Activated CD4-positive, alpha-beta T cell treated with anti-CD3 and anti-CD28 coated beads for 36 hours (primary cell): ENCODE measurements at regions of chr3 and their contacts with region 1.

Region 1: GRCh38 chr3:69212411-69213139 is 90.2 kb upstream of the LMOD3 start:
- DNase-seq: no peak
- ATAC-seq: peak; percentile 88
- H3K4me3 Mint-ChIP-seq: no peak overlapping the region
- H3K27ac Mint-ChIP-seq: peak overlapping the region; percentile 58
- H3K4me1 Mint-ChIP-seq: peaks cover 32% of the 10 kb centered on the region
- H3K27me3 Mint-ChIP-seq: peaks cover 3% of the 10 kb centered on the region

Region 2: DNA sequence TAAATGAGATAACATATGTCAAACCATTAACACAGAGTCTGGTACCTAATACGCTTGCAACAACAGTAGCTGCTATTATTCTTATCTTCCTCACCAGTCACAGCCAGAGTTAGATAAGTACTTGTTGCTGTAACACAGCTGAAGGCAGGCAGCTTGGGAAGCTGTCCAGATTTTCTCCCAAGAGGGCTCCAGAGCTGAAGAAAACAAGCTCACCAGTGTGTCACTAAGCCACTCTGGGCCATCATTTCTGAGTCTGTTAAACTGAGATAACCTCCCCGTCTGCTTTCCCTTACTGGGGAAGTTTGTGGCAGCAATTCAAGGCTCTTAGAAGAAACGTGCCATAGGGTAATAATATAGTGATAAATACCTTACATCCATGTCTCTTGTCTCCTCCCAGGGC is 506.5 kb before region 1 on chr3:
- CTCF ChIA-PET with region 1: no interaction called
- POLR2A ChIA-PET with region 1: no interaction called
- intact Hi-C with region 1: no loop called
- DNase-seq: no peak
- ATAC-seq: no peak
- H3K4me3 Mint-ChIP-seq: no peak overlapping the region
- H3K27ac Mint-ChIP-seq: no peak overlapping the region
- H3K4me1 Mint-ChIP-seq: no peaks in the 10 kb centered on the region
- H3K27me3 Mint-ChIP-seq: peaks cover 3% of the 10 kb centered on the region

Region 3: DNA sequence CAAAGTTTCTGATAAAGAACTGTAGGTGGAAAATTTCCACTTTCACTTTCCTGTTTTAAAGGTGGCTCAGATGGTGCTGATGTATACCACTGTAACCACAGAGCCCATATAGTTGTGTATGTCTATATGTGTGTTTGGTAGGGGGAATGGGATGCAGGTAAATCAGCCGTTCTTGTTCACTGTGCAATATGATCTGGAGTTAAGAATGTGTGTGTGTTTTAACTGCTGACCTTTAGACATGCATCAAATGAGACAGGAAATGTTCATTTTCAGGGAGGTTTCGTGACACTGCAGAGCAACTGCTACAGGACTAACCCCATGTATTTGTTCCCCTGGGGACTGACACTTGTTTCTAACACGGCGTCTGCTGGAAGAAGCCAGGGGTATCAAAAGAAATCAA is 460.7 kb before region 1 on chr3:
- CTCF ChIA-PET with region 1: no interaction called
- POLR2A ChIA-PET with region 1: no interaction called
- intact Hi-C with region 1: no loop called
- DNase-seq: no peak
- ATAC-seq: no peak
- H3K4me3 Mint-ChIP-seq: no peak overlapping the region
- H3K27ac Mint-ChIP-seq: no peak overlapping the region
- H3K4me1 Mint-ChIP-seq: peaks cover 9% of the 10 kb centered on the region
- H3K27me3 Mint-ChIP-seq: peaks cover 4% of the 10 kb centered on the region

Region 4: DNA sequence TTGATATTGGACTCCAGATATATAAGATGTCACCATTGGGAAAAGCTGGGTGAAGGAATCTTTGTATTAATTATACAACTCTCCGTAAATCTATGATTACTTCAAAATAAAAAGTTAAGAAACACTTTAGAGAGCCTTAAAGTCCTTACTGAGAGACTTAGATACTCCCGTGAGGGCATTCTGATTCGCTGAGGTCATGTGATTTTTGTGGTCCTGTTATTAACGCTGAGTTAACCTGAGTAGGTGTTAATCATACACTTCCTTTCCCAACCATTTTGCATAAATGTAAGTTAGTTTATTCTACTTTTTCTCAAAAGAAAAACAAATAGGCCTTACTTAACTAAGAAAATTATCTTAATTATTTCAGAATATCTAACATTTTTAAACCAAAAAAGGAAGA is 23.1 kb before region 1 on chr3:
- CTCF ChIA-PET with region 1: no interaction called
- POLR2A ChIA-PET with region 1: no interaction called
- intact Hi-C with region 1: no loop called
- DNase-seq: no peak
- ATAC-seq: no peak
- H3K4me3 Mint-ChIP-seq: no peak overlapping the region
- H3K27ac Mint-ChIP-seq: no peak overlapping the region
- H3K4me1 Mint-ChIP-seq: peaks cover 6% of the 10 kb centered on the region
- H3K27me3 Mint-ChIP-seq: no peaks in the 10 kb centered on the region

Region 5: DNA sequence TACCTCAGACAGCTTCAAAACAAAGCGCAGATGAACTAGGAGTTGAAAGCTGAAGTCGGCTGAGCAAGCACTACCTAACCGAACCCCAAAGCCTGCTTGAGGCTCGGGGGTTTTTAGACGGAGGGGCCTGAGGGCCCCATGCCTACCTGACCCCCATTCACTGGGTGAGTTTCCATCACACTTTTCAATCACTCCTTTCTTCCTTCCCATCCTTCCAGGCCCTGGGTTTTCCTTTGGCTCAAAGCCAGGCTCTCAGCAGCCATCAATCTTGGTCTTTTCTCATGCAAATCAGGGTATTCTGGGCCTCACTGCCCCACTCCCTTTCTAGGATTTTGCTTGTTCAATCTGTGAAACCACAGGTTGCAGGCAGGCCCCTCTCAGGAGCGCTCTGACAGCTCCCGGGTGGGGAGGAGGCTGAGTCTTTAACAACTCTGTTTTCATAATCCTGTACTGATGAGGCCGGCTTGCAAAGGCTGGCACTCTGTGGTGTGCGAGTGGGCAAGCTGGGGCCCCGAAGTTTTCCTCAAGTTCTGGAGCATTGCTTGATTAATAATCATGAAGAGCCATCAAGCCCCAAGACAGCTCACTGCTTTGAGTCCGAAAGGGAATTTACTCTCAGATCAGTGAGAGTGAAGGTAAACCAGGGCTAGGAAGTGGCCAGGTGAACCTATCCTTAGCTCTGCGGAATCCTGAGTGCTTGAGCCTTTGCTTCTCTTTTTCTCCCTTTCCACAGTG is 75.8 kb after region 1 on chr3:
- CTCF ChIA-PET with region 1: no interaction called
- POLR2A ChIA-PET with region 1: no interaction called
- intact Hi-C with region 1: loop called in 1 of 2 experiments (anchors 1 kb)
- DNase-seq: peak; percentile 77
- ATAC-seq: peak; percentile 97
- H3K4me3 Mint-ChIP-seq: peak overlapping the region; percentile 20
- H3K27ac Mint-ChIP-seq: peak overlapping the region; percentile 16
- H3K4me1 Mint-ChIP-seq: peaks cover 22% of the 10 kb centered on the region
- H3K27me3 Mint-ChIP-seq: no peaks in the 10 kb centered on the region

Region 6: DNA sequence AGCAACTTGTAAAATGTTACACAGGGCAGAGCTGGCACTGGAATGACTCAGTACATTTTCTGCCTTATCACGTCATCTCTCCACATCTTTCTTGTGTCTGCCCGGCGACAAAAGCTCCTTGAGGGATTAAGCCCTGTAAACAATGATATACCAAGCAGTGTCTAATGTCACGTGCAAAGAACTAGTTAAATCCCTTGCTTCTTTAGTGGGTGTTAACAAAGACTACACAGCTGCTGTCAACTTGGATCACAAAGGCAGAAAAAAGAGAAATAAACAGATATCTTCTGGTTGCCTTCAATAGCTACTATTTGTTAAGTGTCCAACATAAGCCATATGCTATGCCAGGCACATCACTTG is 221.4 kb after region 1 on chr3:
- CTCF ChIA-PET with region 1: no interaction called
- POLR2A ChIA-PET with region 1: no interaction called
- intact Hi-C with region 1: loop called in 1 of 2 experiments (anchors 1 kb)
- DNase-seq: peak; percentile 26
- ATAC-seq: peak; percentile 59
- H3K4me3 Mint-ChIP-seq: no peak overlapping the region
- H3K27ac Mint-ChIP-seq: no peak overlapping the region
- H3K4me1 Mint-ChIP-seq: peaks cover 38% of the 10 kb centered on the region
- H3K27me3 Mint-ChIP-seq: peaks cover 8% of the 10 kb centered on the region